ENCODE measurements at regions of chr16 and their contacts with region 1.

Region 1: GRCh38 chr16:26019381-26020242 is 327.9 kb downstream of the HS3ST4 start:
- DNase-seq: no peak
- ATAC-seq: no peak

Region 2: GRCh38 chr16:25966172-25967097 is 53.2 kb before region 1 on chr16:
- intact Hi-C with region 1: loop called (anchors 10 kb)
- DNase-seq: no peak
- ATAC-seq: no peak